A549 (cell line): ENCODE measurements at regions of chr3 and their contacts with region 1.

Region 1: GRCh38 chr3:142578327-142579223 is at the start of gene ATR:
- DNase-seq: peak; percentile 94 to 95
- ATAC-seq: peak; percentile 98
- H3K4me3 ChIP-seq: peak within 1 kb of the TSS; percentile 92
- H3K27ac ChIP-seq: peak within 1 kb of the TSS; percentile 90 to 92
- H3K4me1 ChIP-seq: peaks cover 20% of the 10 kb centered on the region; the same call in 2 of the 3 replicates
- CTCF ChIP-seq: no peak
- EP300 ChIP-seq: peak in 1 of 2 experiments; percentile 19; a peak in 1 of 5 replicates
- POLR2A ChIP-seq: peak; percentile 81
- RAD21 ChIP-seq: no peak
- polyA plus RNA-seq, gene ATR: 28.6 and 36.2 TPM in 2 replicates

Region 2: GRCh38 chr3:142566096-142566495 is 12.5 kb before region 1 on chr3:
- CTCF ChIA-PET with region 1: no interaction called
- POLR2A ChIA-PET with region 1: interaction called, 12 read pairs
- DNase-seq: no peak
- ATAC-seq: no peak
- H3K4me3 ChIP-seq: no peak overlapping the region
- H3K27ac ChIP-seq: no peak overlapping the region
- H3K4me1 ChIP-seq: no peaks in the 10 kb centered on the region
- CTCF ChIP-seq: no peak
- EP300 ChIP-seq: no peak
- POLR2A ChIP-seq: no peak
- RAD21 ChIP-seq: no peak

Region 3: GRCh38 chr3:142595951-142596725 is 17.6 kb after region 1 on chr3 and contains the start of gene PLS1:
- CTCF ChIA-PET with region 1: interaction called, 10 read pairs
- POLR2A ChIA-PET with region 1: interaction called, 9 read pairs
- DNase-seq: peak; percentile 93 to 95
- ATAC-seq: peak; percentile 95 to 97
- H3K4me3 ChIP-seq: peak within 1 kb of the TSS; percentile 56
- H3K27ac ChIP-seq: peak within 1 kb of the TSS; percentile 90 to 93
- H3K4me1 ChIP-seq: peaks cover 17% of the 10 kb centered on the region
- CTCF ChIP-seq: 0 out of 3 replicates have a peak, but pooled peaks have one; percentile 13
- EP300 ChIP-seq: no peak
- POLR2A ChIP-seq: peak; percentile 93
- RAD21 ChIP-seq: peak; percentile 16 to 47; a peak in 3 of 5 replicates
- polyA plus RNA-seq, gene PLS1: 73.7 and 78.1 TPM in 2 replicates

Region 4: DNA sequence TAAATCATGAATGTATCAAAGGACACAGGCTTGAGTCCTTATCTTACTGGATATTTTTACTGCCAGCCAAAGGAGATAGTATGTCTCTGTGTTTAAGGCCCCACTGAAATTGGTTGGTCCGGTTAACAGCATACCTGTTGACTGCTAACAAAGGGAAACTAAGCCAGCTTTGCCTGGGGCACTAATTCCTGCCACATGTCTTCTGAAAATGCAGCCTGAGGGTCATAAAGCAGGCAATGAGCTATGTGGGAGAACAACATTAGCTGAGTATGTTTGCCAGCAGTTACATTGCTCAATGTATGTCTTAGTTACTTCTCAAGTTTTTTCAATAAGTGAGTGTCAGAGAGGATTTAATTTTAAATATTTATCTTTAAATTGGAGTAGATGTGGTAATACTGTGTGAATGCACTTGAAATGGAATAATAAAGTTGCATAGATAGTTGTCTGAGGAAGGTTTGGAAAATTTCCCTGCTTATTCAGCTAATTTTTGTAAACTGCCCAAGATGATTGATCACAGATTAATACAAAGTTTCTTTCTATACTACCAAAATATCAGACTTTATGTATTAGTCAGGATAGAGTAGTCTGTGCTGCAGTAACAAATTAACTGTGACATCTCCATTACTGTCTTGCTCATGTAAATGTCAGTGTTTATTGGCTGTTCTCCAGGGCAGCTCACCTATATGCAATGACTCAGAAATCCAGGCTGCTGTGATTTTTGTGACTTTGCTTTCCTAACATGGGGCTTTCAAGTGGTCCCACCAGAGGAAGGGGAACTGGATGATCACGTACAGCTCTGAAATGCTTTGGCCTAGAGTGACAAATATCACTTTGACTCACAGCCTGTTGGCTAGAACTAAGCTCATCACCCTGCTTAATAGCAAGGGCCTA is 30.3 kb after region 1 on chr3:
- CTCF ChIA-PET with region 1: no interaction called
- POLR2A ChIA-PET with region 1: no interaction called
- DNase-seq: no peak
- ATAC-seq: no peak
- H3K4me3 ChIP-seq: no peak overlapping the region
- H3K27ac ChIP-seq: no peak overlapping the region
- H3K4me1 ChIP-seq: peaks cover 21% of the 10 kb centered on the region
- CTCF ChIP-seq: no peak
- EP300 ChIP-seq: no peak
- POLR2A ChIP-seq: no peak
- RAD21 ChIP-seq: no peak

Region 5: GRCh38 chr3:143001369-143002082 is 423.0 kb after region 1 on chr3 and contains the start of gene U2SURP:
- CTCF ChIA-PET with region 1: no interaction called
- POLR2A ChIA-PET with region 1: interaction called, 20 read pairs
- DNase-seq: peak; percentile 93 to 98
- ATAC-seq: peak; percentile 89 to 92
- H3K4me3 ChIP-seq: peak within 1 kb of the TSS; percentile 93
- H3K27ac ChIP-seq: peak within 1 kb of the TSS; percentile 91 to 96
- H3K4me1 ChIP-seq: peaks cover 44% of the 10 kb centered on the region
- CTCF ChIP-seq: no peak
- EP300 ChIP-seq: no peak; a peak in 1 of 5 replicates
- POLR2A ChIP-seq: peak; percentile 85
- RAD21 ChIP-seq: no peak
- polyA plus RNA-seq, gene U2SURP: 109 and 166 TPM in 2 replicates